GM10248 (cell line): ENCODE measurements at regions of chr14 and their contacts with region 1.

Region 1: GRCh38 chr14:49971156-49972130 is 78.6 kb downstream of the ARF6 start:
- DNase-seq: peak; percentile 70
- CTCF ChIP-seq: no peak

Region 2: GRCh38 chr14:49946320-49947141 is 24.9 kb before region 1 on chr14:
- CTCF ChIA-PET with region 1: interaction called, 10 read pairs
- POLR2A ChIA-PET with region 1: no interaction called
- DNase-seq: no peak
- CTCF ChIP-seq: no peak

Region 3: DNA sequence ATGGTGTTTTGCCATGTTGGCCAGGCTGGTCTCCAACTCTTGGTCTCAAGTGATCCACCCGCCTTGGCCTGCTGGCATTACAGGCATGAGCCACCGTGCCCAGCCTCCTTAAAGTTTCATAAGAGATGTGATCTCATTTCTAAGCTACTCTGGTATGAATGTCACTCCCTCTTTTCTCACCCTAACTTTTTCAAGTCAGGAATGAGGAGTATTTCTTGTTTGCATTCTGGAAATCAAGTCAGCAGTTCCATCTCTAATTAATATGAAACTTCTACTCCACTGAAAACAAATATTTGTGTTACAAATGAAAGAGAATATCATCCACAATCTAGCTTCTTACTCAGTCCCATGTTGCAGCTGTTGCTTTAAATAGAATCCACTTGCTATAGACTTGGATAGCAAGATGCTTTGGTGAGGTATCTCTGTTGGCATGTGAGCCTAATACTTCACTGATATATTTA is 17.2 kb before region 1 on chr14:
- CTCF ChIA-PET with region 1: interaction called, 12 read pairs
- POLR2A ChIA-PET with region 1: interaction called, 3 read pairs
- DNase-seq: no peak
- CTCF ChIP-seq: no peak

Region 4: GRCh38 chr14:49992901-49993335 is 21.5 kb after region 1 on chr14:
- CTCF ChIA-PET with region 1: interaction called, 21 read pairs
- POLR2A ChIA-PET with region 1: interaction called, 3 read pairs
- DNase-seq: peak; percentile 68
- CTCF ChIP-seq: no peak

Region 5: DNA sequence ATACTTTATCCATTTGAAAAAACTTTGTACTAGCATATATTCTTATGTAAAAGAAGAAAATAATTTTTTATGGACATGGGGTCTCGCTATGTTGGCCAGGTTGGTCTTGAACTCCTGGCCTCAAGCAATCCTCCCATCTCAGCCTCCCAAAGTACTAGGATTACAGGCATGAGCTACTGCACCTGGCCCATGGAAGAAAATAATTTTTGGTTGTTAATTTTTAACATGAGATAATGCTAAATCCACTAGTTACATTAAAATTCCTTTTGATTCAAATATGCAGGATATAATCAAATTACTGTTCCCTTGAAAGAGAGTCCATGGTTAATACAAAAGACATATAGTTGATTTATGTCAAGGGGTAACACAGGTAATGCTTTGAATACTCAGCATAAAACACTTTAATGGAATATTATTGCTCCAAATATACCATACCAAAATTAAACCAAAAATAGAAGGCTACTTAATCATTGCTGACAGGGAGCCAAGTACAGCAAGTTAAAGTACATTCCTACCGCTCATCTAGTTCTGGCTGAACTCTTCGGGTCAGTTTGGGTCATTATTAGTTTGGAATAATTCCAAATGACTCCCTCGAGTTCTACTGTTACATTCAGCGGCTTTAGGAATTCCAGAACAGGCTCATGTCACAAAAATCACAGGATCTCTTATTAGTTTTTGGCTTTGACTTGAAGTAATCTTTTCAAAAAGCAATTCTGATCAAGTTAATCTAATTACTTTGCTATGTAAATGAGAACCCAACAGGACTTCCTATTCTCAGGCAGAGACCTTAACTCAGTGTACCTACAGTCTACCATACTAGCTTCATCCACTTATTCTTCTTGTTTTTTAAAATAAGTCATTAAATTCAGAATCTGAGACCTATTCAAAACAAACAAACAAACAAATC is 253.9 kb after region 1 on chr14:
- CTCF ChIA-PET with region 1: no interaction called
- POLR2A ChIA-PET with region 1: no interaction called
- DNase-seq: no peak
- CTCF ChIP-seq: no peak